ENCODE measurements at regions of chr1 and their contacts with region 1.

Region 1: DNA sequence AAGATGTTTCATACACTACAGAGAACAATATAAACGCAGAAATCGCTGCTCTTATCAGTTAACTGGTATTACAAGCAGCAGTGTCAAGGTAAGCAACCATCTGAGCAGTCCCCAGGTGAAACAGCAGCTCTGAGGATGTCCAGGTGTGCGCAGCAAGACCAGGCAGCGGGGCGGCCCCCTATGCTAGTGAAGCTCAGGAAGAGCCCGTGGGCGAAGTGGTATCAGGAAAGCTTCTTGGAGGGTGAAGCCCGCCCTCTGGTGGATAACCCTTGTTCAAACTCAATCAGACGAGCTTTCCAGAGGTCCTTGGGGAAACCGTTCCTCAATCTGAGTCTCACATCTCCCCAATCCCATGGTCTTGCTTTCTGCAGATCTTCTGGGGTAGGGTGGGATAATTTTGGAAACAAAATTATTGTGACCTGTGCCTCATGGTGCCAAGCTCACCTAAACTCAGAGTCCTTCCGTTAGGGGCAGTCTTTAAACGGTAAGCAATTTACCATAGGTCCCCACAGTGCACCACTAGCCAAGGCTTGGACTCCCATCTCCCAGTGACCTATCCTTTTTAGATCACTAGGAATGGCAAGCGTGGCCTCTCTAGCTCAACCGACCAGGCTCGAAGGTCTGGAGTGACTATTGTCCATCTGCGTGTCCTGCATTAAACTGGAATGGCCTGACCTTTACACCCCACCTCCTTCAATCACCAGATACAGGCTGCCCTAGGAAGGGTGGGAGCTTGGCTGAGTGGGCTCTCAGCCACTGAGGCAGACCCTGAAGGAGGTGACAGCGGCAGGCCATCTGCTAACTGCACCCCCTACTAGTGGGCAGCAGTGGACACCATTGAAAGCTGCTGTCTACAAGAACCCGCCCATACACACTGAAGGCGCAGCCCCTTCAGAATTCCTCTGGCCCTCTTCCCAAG is 13.6 kb upstream of the FAM110D start:
- DNase-seq: peak; percentile 86
- ATAC-seq: peak; percentile 97
- H3K4me3 Mint-ChIP-seq: no peak overlapping the region
- H3K27ac Mint-ChIP-seq: no peak overlapping the region
- H3K4me1 Mint-ChIP-seq: no peaks in the 10 kb centered on the region
- H3K27me3 Mint-ChIP-seq: peaks cover 58% of the 10 kb centered on the region
- CTCF ChIP-seq: peak; percentile 58

Region 2: GRCh38 chr1:26029471-26030135 is 115.7 kb before region 1 on chr1:
- CTCF ChIA-PET with region 1: interaction called, 136 read pairs
- POLR2A ChIA-PET with region 1: no interaction called
- DNase-seq: no peak
- ATAC-seq: peak; percentile 34
- H3K4me3 Mint-ChIP-seq: no peak overlapping the region
- H3K27ac Mint-ChIP-seq: no peak overlapping the region
- H3K4me1 Mint-ChIP-seq: peaks cover 6% of the 10 kb centered on the region; the same call in 1 of the 2 replicates
- H3K27me3 Mint-ChIP-seq: peaks cover 31% of the 10 kb centered on the region
- CTCF ChIP-seq: no peak

Region 3: GRCh38 chr1:26059906-26060305 is 85.4 kb before region 1 on chr1:
- CTCF ChIA-PET with region 1: interaction called, 10 read pairs
- POLR2A ChIA-PET with region 1: no interaction called
- DNase-seq: no peak
- ATAC-seq: no peak
- H3K4me3 Mint-ChIP-seq: no peak overlapping the region
- H3K27ac Mint-ChIP-seq: no peak overlapping the region
- H3K4me1 Mint-ChIP-seq: no peaks in the 10 kb centered on the region
- H3K27me3 Mint-ChIP-seq: peaks cover 7% of the 10 kb centered on the region
- CTCF ChIP-seq: no peak

Region 4: GRCh38 chr1:26102526-26102925 is 42.8 kb before region 1 on chr1:
- CTCF ChIA-PET with region 1: interaction called, 49 read pairs
- POLR2A ChIA-PET with region 1: interaction called, 3 read pairs
- DNase-seq: no peak
- ATAC-seq: no peak
- H3K4me3 Mint-ChIP-seq: no peak overlapping the region
- H3K27ac Mint-ChIP-seq: no peak overlapping the region
- H3K4me1 Mint-ChIP-seq: peaks cover 4% of the 10 kb centered on the region; the same call in 1 of the 2 replicates
- H3K27me3 Mint-ChIP-seq: peaks cover 7% of the 10 kb centered on the region; the same call in 1 of the 2 replicates
- CTCF ChIP-seq: no peak

Region 5: GRCh38 chr1:26161415-26162219 is 16.3 kb after region 1 on chr1:
- CTCF ChIA-PET with region 1: interaction called, 65 read pairs
- POLR2A ChIA-PET with region 1: interaction called, 3 read pairs
- DNase-seq: peak; percentile 64
- ATAC-seq: peak; percentile 4; the same call in 1 of the 2 replicates
- H3K4me3 Mint-ChIP-seq: peak overlapping the region; percentile 74
- H3K27ac Mint-ChIP-seq: no peak overlapping the region
- H3K4me1 Mint-ChIP-seq: peaks cover 56% of the 10 kb centered on the region
- H3K27me3 Mint-ChIP-seq: peaks cover 92% of the 10 kb centered on the region
- CTCF ChIP-seq: no peak

Region 6: GRCh38 chr1:26233903-26234643 is 88.8 kb after region 1 on chr1 and contains the start of gene CEP85:
- CTCF ChIA-PET with region 1: interaction called, 19 read pairs
- POLR2A ChIA-PET with region 1: no interaction called
- DNase-seq: peak; percentile 99
- ATAC-seq: peak; percentile 96
- H3K4me3 Mint-ChIP-seq: peak within 1 kb of the TSS; percentile 99
- H3K27ac Mint-ChIP-seq: peak within 1 kb of the TSS; percentile 87
- H3K4me1 Mint-ChIP-seq: peaks cover 25% of the 10 kb centered on the region
- H3K27me3 Mint-ChIP-seq: peaks cover 4% of the 10 kb centered on the region
- CTCF ChIP-seq: peak; percentile 49; the same call in 1 of the 2 replicates
- total RNA-seq, gene CEP85: 32.0 to 40.8 TPM (median 35.3 TPM) in 3 replicates

Region 7: GRCh38 chr1:26384076-26384475 is 238.8 kb after region 1 on chr1:
- CTCF ChIA-PET with region 1: no interaction called
- POLR2A ChIA-PET with region 1: no interaction called
- DNase-seq: no peak
- ATAC-seq: no peak
- H3K4me3 Mint-ChIP-seq: no peak overlapping the region
- H3K27ac Mint-ChIP-seq: no peak overlapping the region
- H3K4me1 Mint-ChIP-seq: peaks cover 5% of the 10 kb centered on the region
- H3K27me3 Mint-ChIP-seq: no peaks in the 10 kb centered on the region
- CTCF ChIP-seq: no peak